ENCODE measurements at regions of chr6 and their contacts with region 1.

Region 1: GRCh38 chr6:144013486-144013909 is 5.4 kb upstream of the PLAGL1 start:
- DNase-seq: peak; percentile 67 to 88 (median 80)
- ATAC-seq: peak; percentile 85
- H3K4me3 ChIP-seq: no peak overlapping the region
- H3K27ac ChIP-seq: no peak overlapping the region
- H3K4me1 ChIP-seq: no peaks in the 10 kb centered on the region
- H3K27me3 ChIP-seq: peaks cover 0 to under 1% of the 10 kb centered on the region in 2 donors
- CTCF ChIP-seq: peak; percentile 88 to 93

Region 2: DNA sequence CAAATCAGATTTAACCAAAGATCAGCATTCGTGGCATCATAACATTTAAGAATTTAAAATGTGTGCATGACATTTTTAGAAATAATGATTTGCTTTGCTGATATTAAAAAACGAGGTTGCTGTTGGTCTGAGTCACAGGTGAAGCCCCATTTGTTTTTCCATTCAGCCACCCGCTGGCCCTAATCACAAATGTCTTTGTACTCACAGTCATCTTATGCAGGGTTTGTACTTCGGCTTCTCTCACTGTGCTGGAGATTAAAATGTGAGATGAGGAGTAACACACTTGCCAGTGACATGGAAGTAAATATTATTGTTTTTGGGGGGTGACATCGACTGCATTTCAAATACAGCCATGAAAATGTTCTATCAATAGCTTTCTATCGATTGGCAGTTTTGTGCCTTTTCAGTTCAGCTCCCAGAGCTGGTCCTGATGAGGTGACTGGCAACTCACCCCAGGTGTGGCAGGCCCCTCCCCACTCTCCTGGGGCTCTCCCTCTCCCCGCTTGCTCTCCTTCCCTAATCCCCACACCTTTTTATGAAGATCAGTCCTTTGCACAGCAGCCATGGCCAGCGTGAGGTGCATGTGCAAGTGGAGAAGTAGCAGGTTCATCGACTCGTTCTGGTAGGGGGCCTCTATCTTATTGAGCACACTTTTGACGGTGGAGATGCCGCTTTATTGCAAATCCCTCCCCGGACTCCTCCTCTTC is 443.2 kb before region 1 on chr6:
- intact Hi-C with region 1: loop called in 1 of 2 experiments (anchors 5 kb)
- DNase-seq: no peak
- ATAC-seq: no peak
- H3K4me3 ChIP-seq: no peak overlapping the region
- H3K27ac ChIP-seq: no peak overlapping the region
- H3K4me1 ChIP-seq: no peaks in the 10 kb centered on the region
- H3K27me3 ChIP-seq: no peaks in the 10 kb centered on the region
- CTCF ChIP-seq: no peak

Region 3: DNA sequence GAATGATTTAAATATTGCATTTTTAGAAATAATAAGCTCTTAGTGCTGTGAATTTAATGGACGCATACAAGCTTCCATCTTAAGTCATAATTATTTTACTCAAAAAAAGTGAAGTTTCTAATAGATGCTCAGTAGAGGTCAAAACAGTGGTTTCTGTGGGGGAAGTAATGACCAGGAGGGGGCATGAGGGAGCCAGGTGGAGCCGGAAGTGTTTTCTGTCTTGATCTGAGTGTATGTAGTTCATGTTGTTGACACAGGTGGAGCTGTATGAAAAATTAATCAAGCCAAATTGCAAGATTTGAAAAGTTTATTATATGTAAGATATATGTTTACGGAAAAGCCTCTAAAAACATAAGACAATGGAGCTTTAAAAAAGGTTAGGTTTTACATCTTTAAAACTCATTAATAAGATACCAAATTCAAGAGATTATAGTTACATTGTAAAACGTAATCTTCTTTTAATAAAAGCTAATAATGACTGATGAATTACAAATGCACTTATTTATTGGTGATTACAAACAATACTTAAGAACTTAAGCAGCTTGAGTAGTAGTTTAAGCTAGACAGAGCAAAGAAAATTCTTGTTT is 73.4 kb before region 1 on chr6:
- intact Hi-C with region 1: loop called in 1 of 2 experiments (anchors 5 kb)
- DNase-seq: no peak
- ATAC-seq: peak; percentile 88
- H3K4me3 ChIP-seq: no peak overlapping the region
- H3K27ac ChIP-seq: no peak overlapping the region
- H3K4me1 ChIP-seq: no peaks in the 10 kb centered on the region
- H3K27me3 ChIP-seq: no peaks in the 10 kb centered on the region
- CTCF ChIP-seq: peak; percentile 58 to 60